Spleen (tissue), 13 donors: ENCODE measurements at regions of chr3 and their contacts with region 1.

Region 1: GRCh38 chr3:179015551-179016020 is 56.0 kb downstream of the ZMAT3 start:
- DNase-seq: no peak
- H3K4me3 ChIP-seq: no peak overlapping the region
- H3K27ac ChIP-seq: peak overlapping the region in 1 of 8 donors; percentile 12
- H3K4me1 ChIP-seq: peaks cover 0 to 57% (median 31%) of the 10 kb centered on the region in 6 donors
- H3K27me3 ChIP-seq: no peaks in the 10 kb centered on the region
- CTCF ChIP-seq: peak; percentile 74 to 93 (median 87)
- POLR2A ChIP-seq: no peak

Region 2: GRCh38 chr3:179071550-179072397 is 56.2 kb after region 1 on chr3 and contains the start of gene ZMAT3:
- intact Hi-C with region 1: loop called (anchors 10 kb)
- DNase-seq: peak; percentile 96
- H3K4me3 ChIP-seq: peak within 1 kb of the TSS; percentile 67 to 93 (median 81)
- H3K27ac ChIP-seq: peak within 1 kb of the TSS; percentile 84 to 97 (median 94)
- H3K4me1 ChIP-seq: peaks cover 7 to 54% (median 27%) of the 10 kb centered on the region in 6 donors
- H3K27me3 ChIP-seq: no peaks in the 10 kb centered on the region
- CTCF ChIP-seq: peak in 1 of 11 experiments; percentile 8
- POLR2A ChIP-seq: peak in 2 of 3 donors; percentile 39 to 72
- total RNA-seq, gene ZMAT3: 15.4 to 29.7 (median 20.3) TPM

Region 3: GRCh38 chr3:179141890-179142289 is 126.3 kb after region 1 on chr3:
- intact Hi-C with region 1: loop called (anchors 5 kb)
- DNase-seq: no peak
- H3K4me3 ChIP-seq: no peak overlapping the region
- H3K27ac ChIP-seq: no peak overlapping the region
- H3K4me1 ChIP-seq: peaks cover 0 to 7% (median 5%) of the 10 kb centered on the region in 6 donors
- H3K27me3 ChIP-seq: no peaks in the 10 kb centered on the region
- CTCF ChIP-seq: no peak
- POLR2A ChIP-seq: no peak

Region 4: GRCh38 chr3:179318876-179319275 is 303.3 kb after region 1 on chr3:
- intact Hi-C with region 1: loop called (anchors 5 kb)
- DNase-seq: no peak
- H3K4me3 ChIP-seq: no peak overlapping the region
- H3K27ac ChIP-seq: no peak overlapping the region
- H3K4me1 ChIP-seq: peaks cover 4 to 39% (median 18%) of the 10 kb centered on the region in 6 donors
- H3K27me3 ChIP-seq: no peaks in the 10 kb centered on the region
- CTCF ChIP-seq: no peak
- POLR2A ChIP-seq: no peak

Region 5: DNA sequence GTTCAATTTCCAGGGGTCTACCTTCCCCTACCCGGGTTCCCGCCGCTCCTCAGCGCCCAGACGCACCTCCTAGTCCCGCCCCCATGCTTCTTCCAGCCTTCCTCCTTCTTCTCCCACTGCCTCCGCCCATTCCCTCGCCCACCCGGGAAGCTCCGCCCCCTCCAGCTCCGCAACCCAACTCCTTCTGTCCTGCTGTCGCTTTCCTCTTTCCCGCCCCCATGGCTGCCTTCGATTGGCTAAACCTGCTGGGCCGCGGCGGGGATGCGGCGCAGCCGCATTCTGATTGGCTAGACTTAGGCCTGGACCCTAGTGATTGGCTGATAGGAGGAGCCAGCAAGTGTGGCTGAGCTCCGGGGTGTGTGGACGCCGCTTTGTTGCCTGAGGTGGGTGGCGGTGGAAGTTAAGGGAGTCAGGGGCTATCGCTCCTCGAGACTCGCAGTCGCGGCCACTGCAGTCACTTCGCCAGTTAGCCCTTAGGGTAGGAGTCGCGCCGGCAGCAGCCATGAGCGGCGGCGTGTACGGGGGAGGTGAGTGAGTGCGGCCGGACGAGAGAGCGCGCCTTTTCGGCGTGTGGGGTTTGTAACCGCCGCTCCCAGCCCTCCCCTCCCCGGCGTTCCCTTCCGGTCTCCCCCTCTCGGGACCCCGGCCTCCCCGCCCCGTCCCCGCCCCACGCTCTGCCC is 547.1 kb after region 1 on chr3 and contains the start of gene ACTL6A:
- intact Hi-C with region 1: loop called (anchors 5 kb)
- DNase-seq: peak; percentile 99
- H3K4me3 ChIP-seq: peak within 1 kb of the TSS; percentile 89 to 99 (median 94)
- H3K27ac ChIP-seq: peak within 1 kb of the TSS; percentile 78 to 93 (median 89)
- H3K4me1 ChIP-seq: peaks cover 7 to 59% (median 28%) of the 10 kb centered on the region in 6 donors
- H3K27me3 ChIP-seq: no peaks in the 10 kb centered on the region
- CTCF ChIP-seq: peak in 1 of 11 experiments; percentile 32
- POLR2A ChIP-seq: peak in 1 of 3 donors; percentile 29
- total RNA-seq, gene ACTL6A: 33.9 to 69.5 (median 45.5) TPM